WTC11 (cell line): ENCODE measurements at regions of chr18 and their contacts with region 1.

Region 1: DNA sequence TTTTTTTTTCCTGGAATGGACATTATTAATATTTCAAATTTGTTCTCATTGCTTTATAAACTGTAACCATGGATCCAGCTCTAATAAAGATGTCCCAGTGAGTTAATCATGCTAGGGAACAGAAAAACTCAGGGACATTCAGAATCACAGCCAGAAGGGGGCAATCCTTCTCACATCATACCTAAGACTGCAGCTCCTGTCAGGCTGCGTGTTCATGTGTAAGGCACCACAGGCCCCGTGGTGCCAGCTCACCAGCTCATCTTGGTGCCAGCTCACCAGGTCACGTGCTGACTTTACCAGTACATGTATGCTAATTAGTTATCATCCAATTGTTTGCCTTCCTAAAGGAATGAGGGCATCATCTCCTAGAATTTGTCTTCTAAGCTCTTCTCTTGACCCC is 84.7 kb upstream of the NEDD4L start:
- DNase-seq: no peak
- ATAC-seq: peak; percentile 90
- H3K4me3 Mint-ChIP-seq: no peak overlapping the region
- H3K27ac Mint-ChIP-seq: no peak overlapping the region
- H3K4me1 Mint-ChIP-seq: peaks cover 5% of the 10 kb centered on the region
- H3K27me3 Mint-ChIP-seq: no peaks in the 10 kb centered on the region
- CTCF ChIP-seq: no peak

Region 2: GRCh38 chr18:57764995-57765394 is 194.3 kb before region 1 on chr18:
- CTCF ChIA-PET with region 1: no interaction called
- POLR2A ChIA-PET with region 1: no interaction called
- DNase-seq: no peak
- ATAC-seq: no peak
- H3K4me3 Mint-ChIP-seq: no peak overlapping the region
- H3K27ac Mint-ChIP-seq: no peak overlapping the region
- H3K4me1 Mint-ChIP-seq: no peaks in the 10 kb centered on the region
- H3K27me3 Mint-ChIP-seq: no peaks in the 10 kb centered on the region
- CTCF ChIP-seq: no peak

Region 3: DNA sequence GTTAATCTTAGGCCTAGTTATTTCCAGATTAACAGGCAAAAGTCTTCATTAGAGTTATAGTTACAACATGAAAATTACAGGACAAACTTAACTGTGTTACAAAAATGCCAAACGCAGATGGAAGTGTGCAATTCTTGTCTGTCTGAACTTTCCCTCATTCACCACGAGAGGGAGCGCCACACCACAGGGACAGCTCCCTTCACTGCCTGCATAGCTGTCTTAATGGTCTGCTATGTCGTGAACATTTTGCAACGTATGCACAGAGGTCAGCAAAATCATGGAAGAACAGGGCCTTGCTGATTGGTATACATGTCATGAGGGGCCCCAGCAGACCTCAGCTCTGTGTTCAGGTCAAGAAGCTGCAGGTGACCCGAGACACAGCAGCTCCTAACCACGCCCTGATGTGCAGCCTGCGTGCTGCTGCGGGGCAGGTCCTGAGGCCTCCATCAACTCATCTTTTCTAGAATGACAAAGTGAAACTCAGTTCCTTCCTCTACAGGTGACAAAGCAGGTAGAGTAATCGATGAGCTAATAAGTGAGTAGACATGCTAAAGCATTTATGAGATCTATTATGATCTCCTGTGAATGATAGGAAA is 77.4 kb before region 1 on chr18:
- CTCF ChIA-PET with region 1: interaction called, 17 read pairs
- POLR2A ChIA-PET with region 1: no interaction called
- DNase-seq: peak; percentile 59
- ATAC-seq: peak; percentile 95
- H3K4me3 Mint-ChIP-seq: no peak overlapping the region
- H3K27ac Mint-ChIP-seq: no peak overlapping the region
- H3K4me1 Mint-ChIP-seq: no peaks in the 10 kb centered on the region
- H3K27me3 Mint-ChIP-seq: peaks cover 4% of the 10 kb centered on the region; the same call in 1 of the 2 replicates
- CTCF ChIP-seq: peak; percentile 89

Region 4: DNA sequence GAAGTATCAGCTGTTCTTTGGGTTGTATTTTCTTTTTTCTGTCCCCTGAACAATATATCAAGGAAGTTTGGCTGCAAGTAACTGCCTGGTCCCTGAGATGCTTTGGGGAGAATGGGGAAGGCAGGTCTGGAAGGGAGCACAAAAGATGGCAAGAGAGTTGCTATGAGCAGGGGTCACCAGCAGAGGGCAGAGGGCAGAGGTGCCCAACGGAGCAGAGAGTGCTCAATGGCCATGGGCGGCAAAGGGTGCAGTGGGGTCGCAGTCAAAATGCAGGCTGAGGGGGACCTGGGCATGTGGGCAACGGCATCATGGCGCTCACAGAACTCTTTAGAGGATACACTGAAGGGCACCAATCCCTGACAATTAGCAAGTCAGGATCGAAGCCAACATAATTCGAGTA is 48.5 kb before region 1 on chr18:
- CTCF ChIA-PET with region 1: interaction called, 12 read pairs
- POLR2A ChIA-PET with region 1: no interaction called
- DNase-seq: peak; percentile 80
- ATAC-seq: peak; percentile 84
- H3K4me3 Mint-ChIP-seq: no peak overlapping the region
- H3K27ac Mint-ChIP-seq: no peak overlapping the region
- H3K4me1 Mint-ChIP-seq: peaks cover 27% of the 10 kb centered on the region
- H3K27me3 Mint-ChIP-seq: no peaks in the 10 kb centered on the region; the same call in 1 of the 2 replicates
- CTCF ChIP-seq: peak; percentile 74

Region 5: GRCh38 chr18:57943723-57944122 is 15.6 kb before region 1 on chr18:
- CTCF ChIA-PET with region 1: interaction called, 10 read pairs
- POLR2A ChIA-PET with region 1: no interaction called
- DNase-seq: no peak
- ATAC-seq: no peak
- H3K4me3 Mint-ChIP-seq: no peak overlapping the region
- H3K27ac Mint-ChIP-seq: no peak overlapping the region
- H3K4me1 Mint-ChIP-seq: peaks cover 22% of the 10 kb centered on the region
- H3K27me3 Mint-ChIP-seq: no peaks in the 10 kb centered on the region; the same call in 1 of the 2 replicates
- CTCF ChIP-seq: no peak

Region 6: GRCh38 chr18:58024139-58024538 is 64.9 kb after region 1 on chr18:
- CTCF ChIA-PET with region 1: no interaction called
- POLR2A ChIA-PET with region 1: no interaction called
- DNase-seq: no peak
- ATAC-seq: no peak; the same call in 1 of the 2 replicates
- H3K4me3 Mint-ChIP-seq: no peak overlapping the region
- H3K27ac Mint-ChIP-seq: no peak overlapping the region
- H3K4me1 Mint-ChIP-seq: peaks cover 12% of the 10 kb centered on the region
- H3K27me3 Mint-ChIP-seq: no peaks in the 10 kb centered on the region
- CTCF ChIP-seq: no peak

Region 7: GRCh38 chr18:58043491-58044379 is 84.5 kb after region 1 on chr18 and contains the start of gene NEDD4L:
- CTCF ChIA-PET with region 1: interaction called, 16 read pairs
- POLR2A ChIA-PET with region 1: no interaction called
- DNase-seq: peak; percentile 83
- ATAC-seq: peak; percentile 68
- H3K4me3 Mint-ChIP-seq: peak within 1 kb of the TSS; percentile 98
- H3K27ac Mint-ChIP-seq: peak within 1 kb of the TSS; percentile 97
- H3K4me1 Mint-ChIP-seq: peaks cover 28% of the 10 kb centered on the region
- H3K27me3 Mint-ChIP-seq: peaks cover 9% of the 10 kb centered on the region
- CTCF ChIP-seq: peak; percentile 32; the same call in 1 of the 2 replicates
- total RNA-seq, gene NEDD4L: 60.9 to 88.0 TPM (median 69.3 TPM) in 3 replicates

Region 8: GRCh38 chr18:58135701-58136331 is 176.5 kb after region 1 on chr18:
- CTCF ChIA-PET with region 1: interaction called, 12 read pairs
- POLR2A ChIA-PET with region 1: no interaction called
- DNase-seq: peak; percentile 74
- ATAC-seq: peak; percentile 85
- H3K4me3 Mint-ChIP-seq: no peak overlapping the region
- H3K27ac Mint-ChIP-seq: peak overlapping the region; percentile 85
- H3K4me1 Mint-ChIP-seq: peaks cover 52% of the 10 kb centered on the region
- H3K27me3 Mint-ChIP-seq: no peaks in the 10 kb centered on the region
- CTCF ChIP-seq: peak; percentile 85

Region 9: DNA sequence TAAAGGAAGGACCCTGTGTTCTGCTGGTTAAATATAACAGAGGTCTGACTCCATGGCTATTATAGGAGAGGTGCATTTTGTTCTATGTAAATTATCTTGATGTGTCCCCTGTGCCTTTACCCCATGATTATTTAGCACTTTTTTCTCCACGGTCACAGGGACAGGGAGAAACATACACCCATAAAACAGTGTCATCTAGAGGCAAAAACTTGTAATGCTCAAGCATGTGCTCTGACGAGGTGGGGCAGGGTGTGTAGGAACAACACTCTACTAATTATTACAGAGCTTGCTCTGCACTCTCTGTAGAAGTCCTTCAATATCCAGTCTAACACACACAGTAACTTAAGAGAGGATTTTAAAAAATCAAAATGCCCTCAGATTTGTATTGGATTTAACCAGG is 272.7 kb after region 1 on chr18:
- CTCF ChIA-PET with region 1: no interaction called
- POLR2A ChIA-PET with region 1: no interaction called
- DNase-seq: no peak
- ATAC-seq: peak; percentile 43
- H3K4me3 Mint-ChIP-seq: no peak overlapping the region
- H3K27ac Mint-ChIP-seq: peak overlapping the region; percentile 30; the same call in 1 of the 2 replicates
- H3K4me1 Mint-ChIP-seq: peaks cover 61% of the 10 kb centered on the region
- H3K27me3 Mint-ChIP-seq: no peaks in the 10 kb centered on the region
- CTCF ChIP-seq: no peak